Transverse colon (tissue), 4 donors: ENCODE measurements at regions of chr5 and their contacts with region 1.

Region 1: GRCh38 chr5:68652534-68652965 is 437.0 kb downstream of the PIK3R1 start:
- DNase-seq: no peak
- H3K4me3 ChIP-seq: no peak overlapping the region
- H3K27ac ChIP-seq: no peak overlapping the region
- H3K4me1 ChIP-seq: peaks cover 3 to 18% (median 12%) of the 10 kb centered on the region in 4 donors
- H3K27me3 ChIP-seq: no peaks in the 10 kb centered on the region
- CTCF ChIP-seq: no peak
- EP300 ChIP-seq: no peak
- POLR2A ChIP-seq: no peak

Region 2: DNA sequence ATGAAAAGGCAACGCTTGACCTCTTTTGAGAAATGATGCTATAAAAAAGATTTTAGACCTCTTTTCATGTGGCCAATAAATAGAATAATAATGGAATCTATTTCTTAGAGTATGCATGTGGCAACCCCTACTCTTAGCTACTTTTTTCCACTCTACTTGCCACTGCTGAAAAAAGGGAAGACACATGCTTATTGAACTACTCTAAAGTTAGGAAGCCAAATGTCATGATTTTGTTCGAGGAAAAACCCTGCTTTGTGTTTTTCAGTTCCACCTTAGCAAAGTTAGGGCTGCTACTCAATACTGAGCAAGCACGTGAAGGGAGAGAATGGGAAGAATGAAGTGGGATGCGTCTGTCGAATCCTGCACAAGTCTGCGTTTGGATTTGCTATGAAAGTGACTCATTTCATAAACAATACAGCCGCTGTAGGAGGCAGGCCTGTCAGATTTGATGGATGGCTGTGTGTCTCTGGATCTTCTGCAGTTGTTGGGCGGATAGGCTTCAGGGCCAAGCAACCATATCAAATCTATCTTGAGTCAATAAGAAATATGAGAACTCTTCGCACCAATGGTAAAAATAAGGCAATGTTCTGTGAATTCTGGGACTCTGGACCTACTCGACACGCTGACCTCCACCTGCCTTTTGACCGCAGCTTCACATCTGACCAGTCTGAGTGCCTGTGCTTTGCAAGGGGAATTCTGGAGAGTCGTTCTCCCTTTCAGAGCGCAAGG is 103.4 kb before region 1 on chr5:
- in situ Hi-C with region 1: no loop called
- intact Hi-C with region 1: no loop called
- DNase-seq: no peak
- H3K4me3 ChIP-seq: no peak overlapping the region
- H3K27ac ChIP-seq: no peak overlapping the region
- H3K4me1 ChIP-seq: peaks cover 0 to 9% (median 7%) of the 10 kb centered on the region in 4 donors
- H3K27me3 ChIP-seq: no peaks in the 10 kb centered on the region
- CTCF ChIP-seq: no peak
- EP300 ChIP-seq: no peak
- POLR2A ChIP-seq: no peak

Region 3: DNA sequence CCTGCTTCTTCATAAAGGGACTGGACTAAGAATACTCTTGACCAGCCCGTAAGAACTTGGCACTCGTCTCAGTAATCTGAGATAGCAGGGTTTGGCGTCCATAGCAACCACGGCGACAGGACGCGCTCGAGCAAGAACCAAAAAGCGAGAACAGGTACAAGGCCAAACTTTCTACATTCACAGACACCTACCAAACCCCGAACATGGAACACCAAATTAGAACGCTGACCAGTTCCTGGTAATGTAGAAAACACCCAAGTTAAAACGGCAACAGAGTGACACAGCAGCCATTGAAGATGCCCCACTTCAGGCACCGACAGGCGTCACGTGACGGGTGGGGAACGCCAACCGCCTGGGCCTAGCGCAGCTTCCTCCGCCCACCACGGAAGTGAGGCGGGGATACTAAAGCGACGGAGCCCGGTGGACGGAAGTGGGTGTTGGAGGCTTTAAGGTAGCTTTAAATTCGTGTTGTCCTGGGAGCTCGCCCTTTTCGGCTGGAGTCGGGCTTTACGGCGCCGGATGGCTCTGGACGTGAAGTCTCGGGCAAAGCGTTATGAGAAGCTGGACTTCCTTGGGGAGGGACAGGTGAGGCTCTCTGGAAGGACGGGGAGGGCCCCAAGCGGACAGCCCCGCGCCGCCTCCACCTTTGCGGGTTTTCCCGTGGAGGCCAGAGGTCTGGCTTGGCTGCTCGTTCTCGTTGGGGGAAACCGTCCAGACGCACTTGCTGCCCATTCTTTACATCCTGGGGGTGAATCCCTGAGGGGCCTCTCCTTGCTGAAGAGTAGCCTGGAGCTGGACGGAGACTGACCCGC is 582.1 kb after region 1 on chr5 and contains the start of gene CDK7:
- in situ Hi-C with region 1: no loop called
- intact Hi-C with region 1: loop called (anchors 10 kb)
- DNase-seq: peak; percentile 95
- H3K4me3 ChIP-seq: peak within 1 kb of the TSS; percentile 82 to 86 (median 83)
- H3K27ac ChIP-seq: peak within 1 kb of the TSS; percentile 86 to 91 (median 90)
- H3K4me1 ChIP-seq: peaks cover 3 to 35% (median 15%) of the 10 kb centered on the region in 4 donors
- H3K27me3 ChIP-seq: no peaks in the 10 kb centered on the region
- CTCF ChIP-seq: no peak
- EP300 ChIP-seq: no peak
- POLR2A ChIP-seq: peak; percentile 79
- total RNA-seq, gene CDK7: 10.8 to 61.7 (median 21.4) TPM